ENCODE measurements at regions of chr2 and their contacts with region 1.

Region 1: DNA sequence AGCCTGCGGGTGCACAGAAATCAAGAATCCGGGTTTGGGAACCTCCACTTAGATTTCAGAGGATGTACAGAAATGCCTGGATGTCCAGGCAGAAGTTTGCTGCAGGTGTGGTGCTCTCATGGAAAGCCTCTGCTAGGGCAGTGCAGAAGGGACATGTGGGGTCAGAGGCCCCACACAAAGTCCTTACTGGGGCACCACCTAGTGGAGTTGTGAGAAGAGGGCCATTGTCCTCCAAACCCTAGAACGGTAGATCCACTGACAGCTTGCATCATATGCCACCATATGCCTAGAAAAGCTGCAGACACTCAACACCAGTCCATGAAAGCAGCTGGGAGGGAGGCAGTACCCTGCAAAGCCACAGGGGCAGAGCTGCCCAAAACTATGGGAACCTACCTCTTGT is 833.0 kb downstream of the TMEM182 start:
- DNase-seq: no peak
- H3K4me3 Mint-ChIP-seq: no peak overlapping the region
- H3K27ac Mint-ChIP-seq: no peak overlapping the region
- H3K4me1 Mint-ChIP-seq: no peaks in the 10 kb centered on the region
- H3K27me3 Mint-ChIP-seq: no peaks in the 10 kb centered on the region

Region 2: GRCh38 chr2:103618112-103618511 is 23.3 kb after region 1 on chr2:
- CTCF ChIA-PET with region 1: no interaction called
- intact Hi-C with region 1: loop called (anchors 2 kb)
- DNase-seq: no peak
- H3K4me3 Mint-ChIP-seq: no peak overlapping the region
- H3K27ac Mint-ChIP-seq: no peak overlapping the region
- H3K4me1 Mint-ChIP-seq: no peaks in the 10 kb centered on the region
- H3K27me3 Mint-ChIP-seq: no peaks in the 10 kb centered on the region

Region 3: DNA sequence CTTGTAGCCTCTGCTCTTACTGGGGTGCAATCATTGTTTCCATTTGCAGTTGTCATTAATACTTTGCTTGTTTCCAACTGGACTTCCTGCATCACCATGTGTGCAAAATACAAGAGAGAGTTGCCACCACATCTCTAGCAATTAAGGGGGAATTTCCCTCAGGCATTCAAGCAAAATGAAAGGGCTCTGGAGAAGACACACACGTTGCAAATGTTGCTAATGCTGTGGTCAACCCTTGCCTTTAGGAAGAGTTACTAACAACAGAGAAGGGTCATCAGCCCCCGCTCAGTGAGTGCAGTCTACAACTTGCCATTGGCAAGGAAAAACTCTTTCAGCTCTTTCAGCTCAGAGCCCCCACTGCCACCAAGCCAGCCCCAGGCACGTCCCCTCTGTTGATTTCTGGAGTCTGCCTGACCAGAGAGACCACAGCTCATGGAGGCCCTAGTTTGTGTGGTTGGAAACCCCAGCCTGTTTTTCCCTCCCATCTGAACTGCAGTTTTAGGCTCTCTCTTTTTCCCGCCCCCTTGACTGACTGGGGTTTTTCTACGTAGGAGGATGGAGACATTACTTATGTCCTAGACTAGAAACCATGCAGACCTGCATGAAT is 1620.9 kb after region 1 on chr2:
- CTCF ChIA-PET with region 1: no interaction called
- intact Hi-C with region 1: no loop called
- DNase-seq: no peak
- H3K4me3 Mint-ChIP-seq: no peak overlapping the region
- H3K27ac Mint-ChIP-seq: no peak overlapping the region
- H3K4me1 Mint-ChIP-seq: no peaks in the 10 kb centered on the region
- H3K27me3 Mint-ChIP-seq: peaks cover 5% of the 10 kb centered on the region

Measured in activated naive CD4-positive, alpha-beta T cell treated with anti-CD3 and anti-CD28 coated beads for 36 hours (primary cell).